T-cell (primary cell): ENCODE measurements at regions of chr1 and their contacts with region 1.

Region 1: GRCh38 chr1:37595440-37596319 is at the start of gene GNL2:
- DNase-seq: peak; percentile 86 to 99 (median 94)
- ATAC-seq: peak; percentile 97 to 100 (median 99)
- H3K4me3 ChIP-seq: peak within 1 kb of the TSS; percentile 69 to 94
- H3K4me3 Mint-ChIP-seq: peak within 1 kb of the TSS; percentile 99 to 100 (median 99)
- H3K27ac ChIP-seq: peak within 1 kb of the TSS; percentile 79
- H3K27ac Mint-ChIP-seq: peak within 1 kb of the TSS; percentile 93 to 97
- H3K4me1 ChIP-seq: peaks cover 18 to 20% of the 10 kb centered on the region in 2 experiments
- H3K4me1 Mint-ChIP-seq: peaks cover 23 to 39% (median 38%) of the 10 kb centered on the region in 3 donors
- H3K27me3 ChIP-seq: no peaks in the 10 kb centered on the region
- H3K27me3 Mint-ChIP-seq: no peaks in the 10 kb centered on the region
- total RNA-seq, gene GNL2: 39.2 to 52.9 (median 45.8) TPM

Region 2: GRCh38 chr1:37688926-37689325 is 93.2 kb after region 1 on chr1:
- CTCF ChIA-PET with region 1: interaction called, 8 to 10 read pairs
- POLR2A ChIA-PET with region 1: interaction called in 1 of 2 experiments, 5 read pairs
- DNase-seq: no peak
- ATAC-seq: no peak
- H3K4me3 ChIP-seq: peak overlapping the region in 1 of 2 donors; percentile 92
- H3K4me3 Mint-ChIP-seq: peak overlapping the region; percentile 95 to 99 (median 96)
- H3K27ac ChIP-seq: no peak overlapping the region
- H3K27ac Mint-ChIP-seq: peak overlapping the region in 1 of 2 donors; percentile 90
- H3K4me1 ChIP-seq: peaks cover 15 to 35% of the 10 kb centered on the region in 2 experiments
- H3K4me1 Mint-ChIP-seq: peaks cover 38 to 44% (median 42%) of the 10 kb centered on the region in 3 donors
- H3K27me3 ChIP-seq: no peaks in the 10 kb centered on the region
- H3K27me3 Mint-ChIP-seq: no peaks in the 10 kb centered on the region

Region 3: DNA sequence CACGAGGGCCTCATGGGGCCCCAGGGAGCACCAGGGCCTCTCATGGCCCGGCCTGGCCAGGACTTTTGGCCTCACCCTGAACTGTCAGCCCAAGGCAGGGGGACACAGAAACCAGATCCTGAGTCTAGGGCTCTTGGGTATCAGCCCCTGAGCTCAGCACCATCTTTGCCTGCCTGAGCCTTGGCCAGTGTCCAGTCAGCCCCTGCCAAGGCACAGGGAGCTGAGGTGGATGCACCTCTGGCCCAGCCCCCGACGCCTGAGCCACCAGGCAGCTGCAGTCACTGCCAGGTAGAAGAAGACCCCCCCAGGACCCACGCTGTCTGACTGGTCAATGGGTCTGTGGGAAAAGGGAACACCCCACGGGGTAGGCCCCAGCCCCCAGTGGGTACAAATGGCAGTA is 122.0 kb after region 1 on chr1:
- CTCF ChIA-PET with region 1: interaction called in 1 of 2 experiments, 15 read pairs
- POLR2A ChIA-PET with region 1: no interaction called
- DNase-seq: no peak
- ATAC-seq: no peak
- H3K4me3 ChIP-seq: no peak overlapping the region
- H3K4me3 Mint-ChIP-seq: no peak overlapping the region
- H3K27ac ChIP-seq: no peak overlapping the region
- H3K27ac Mint-ChIP-seq: no peak overlapping the region
- H3K4me1 ChIP-seq: no peaks in the 10 kb centered on the region
- H3K4me1 Mint-ChIP-seq: no peaks in the 10 kb centered on the region
- H3K27me3 ChIP-seq: peaks cover 0 to 31% of the 10 kb centered on the region in 2 experiments
- H3K27me3 Mint-ChIP-seq: peaks cover 0 to 5% of the 10 kb centered on the region in 2 donors